IMR-90 (cell line): ENCODE measurements at regions of chr5 and their contacts with region 1.

Region 1: GRCh38 chr5:142095651-142096330 is 12.8 kb upstream of the NDFIP1 start:
- DNase-seq: no peak
- ATAC-seq: no peak
- H3K4me3 ChIP-seq: no peak overlapping the region
- H3K27ac ChIP-seq: no peak overlapping the region
- H3K4me1 ChIP-seq: no peaks in the 10 kb centered on the region
- H3K27me3 ChIP-seq: peaks cover 10% of the 10 kb centered on the region
- CTCF ChIP-seq: no peak
- POLR2A ChIP-seq: no peak
- RAD21 ChIP-seq: no peak

Region 2: GRCh38 chr5:142069606-142070399 is 26.0 kb before region 1 on chr5:
- CTCF ChIA-PET with region 1: no interaction called
- POLR2A ChIA-PET with region 1: interaction called, 14 read pairs
- dilution Hi-C with region 1: no loop called
- in situ Hi-C with region 1: no loop called
- intact Hi-C with region 1: no loop called
- DNase-seq: no peak
- ATAC-seq: no peak
- H3K4me3 ChIP-seq: no peak overlapping the region
- H3K27ac ChIP-seq: no peak overlapping the region
- H3K4me1 ChIP-seq: no peaks in the 10 kb centered on the region
- H3K27me3 ChIP-seq: peaks cover 23% of the 10 kb centered on the region
- CTCF ChIP-seq: no peak
- POLR2A ChIP-seq: no peak
- RAD21 ChIP-seq: no peak

Region 3: DNA sequence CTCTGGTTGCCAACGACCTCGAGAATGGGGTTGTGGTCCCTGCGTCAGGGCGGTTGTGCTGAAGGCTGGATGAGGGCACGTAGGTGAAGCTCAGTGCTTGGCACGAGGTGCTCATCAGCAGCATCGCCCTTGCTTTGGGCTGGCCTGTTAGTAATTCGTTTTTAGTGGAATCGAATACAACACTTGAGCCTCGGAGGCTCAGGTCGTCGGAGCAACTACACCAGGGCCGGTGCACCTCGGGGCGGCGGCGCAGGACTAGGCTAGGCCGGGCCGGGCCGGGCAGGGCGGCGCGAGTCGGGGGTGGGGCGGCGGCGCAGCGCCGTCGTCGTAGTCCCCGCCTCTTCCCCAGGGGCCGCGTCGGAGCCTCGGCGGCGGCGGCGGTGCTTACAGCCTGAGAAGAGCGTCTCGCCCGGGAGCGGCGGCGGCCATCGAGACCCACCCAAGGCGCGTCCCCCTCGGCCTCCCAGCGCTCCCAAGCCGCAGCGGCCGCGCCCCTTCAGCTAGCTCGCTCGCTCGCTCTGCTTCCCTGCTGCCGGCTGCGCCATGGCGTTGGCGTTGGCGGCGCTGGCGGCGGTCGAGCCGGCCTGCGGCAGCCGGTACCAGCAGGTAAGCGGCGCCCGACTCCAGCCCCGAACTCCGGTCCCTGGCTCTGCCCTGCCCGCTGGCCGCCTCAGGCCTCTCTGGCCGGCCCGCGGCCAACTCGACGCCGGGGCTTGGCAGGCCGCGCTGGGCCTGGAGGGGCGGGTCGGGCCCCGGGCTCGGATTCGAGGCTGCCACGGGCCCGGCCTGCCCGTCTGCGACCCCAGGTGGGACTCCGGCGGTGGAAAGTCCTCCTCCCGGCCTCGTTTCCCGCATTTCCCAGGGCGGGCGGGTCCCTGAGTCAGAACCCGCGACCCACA is 12.9 kb after region 1 on chr5 and contains the start of gene NDFIP1:
- CTCF ChIA-PET with region 1: no interaction called
- POLR2A ChIA-PET with region 1: no interaction called
- dilution Hi-C with region 1: no loop called
- in situ Hi-C with region 1: no loop called
- intact Hi-C with region 1: no loop called
- DNase-seq: peak; percentile 60
- ATAC-seq: peak; percentile 99
- H3K4me3 ChIP-seq: peak within 1 kb of the TSS; percentile 82
- H3K27ac ChIP-seq: peak within 1 kb of the TSS; percentile 87
- H3K4me1 ChIP-seq: peaks cover 4% of the 10 kb centered on the region
- H3K27me3 ChIP-seq: no peaks in the 10 kb centered on the region
- CTCF ChIP-seq: no peak
- POLR2A ChIP-seq: peak; percentile 74
- RAD21 ChIP-seq: no peak
- total RNA-seq, gene NDFIP1: 7.7 and 21.9 TPM in 2 replicates